Ovary (tissue), 10 donors: ENCODE measurements at regions of chr15 and their contacts with region 1.

Region 1: GRCh38 chr15:50876989-50877360 is 31.5 kb upstream of the AP4E1 start:
- DNase-seq: peak; percentile 62 to 76 (median 72)
- H3K4me3 ChIP-seq: peak overlapping the region; percentile 29
- H3K27ac ChIP-seq: no peak overlapping the region
- H3K4me1 ChIP-seq: peaks cover 1% of the 10 kb centered on the region
- H3K27me3 ChIP-seq: no peaks in the 10 kb centered on the region
- CTCF ChIP-seq: peak; percentile 83 to 85 (median 84)
- EP300 ChIP-seq: no peak
- POLR2A ChIP-seq: no peak

Region 2: GRCh38 chr15:50670115-50670514 is 206.9 kb before region 1 on chr15:
- intact Hi-C with region 1: loop called (anchors 5 to 10 kb)
- DNase-seq: no peak
- H3K4me3 ChIP-seq: no peak overlapping the region
- H3K27ac ChIP-seq: no peak overlapping the region
- H3K4me1 ChIP-seq: no peaks in the 10 kb centered on the region
- H3K27me3 ChIP-seq: no peaks in the 10 kb centered on the region
- CTCF ChIP-seq: no peak
- EP300 ChIP-seq: no peak
- POLR2A ChIP-seq: no peak

Region 3: GRCh38 chr15:50675536-50676144 is 201.3 kb before region 1 on chr15:
- intact Hi-C with region 1: loop called (anchors 5 to 10 kb)
- DNase-seq: no peak
- H3K4me3 ChIP-seq: no peak overlapping the region
- H3K27ac ChIP-seq: no peak overlapping the region
- H3K4me1 ChIP-seq: peaks cover 1% of the 10 kb centered on the region
- H3K27me3 ChIP-seq: no peaks in the 10 kb centered on the region
- CTCF ChIP-seq: peak; percentile 43 to 70 (median 60)
- EP300 ChIP-seq: no peak
- POLR2A ChIP-seq: no peak